Naive thymus-derived CD8-positive, alpha-beta T cell (primary cell): ENCODE measurements at regions of chr17 and their contacts with region 1.

Region 1: GRCh38 chr17:45317112-45317928 is 500 bp upstream of the MAP3K14 start:
- DNase-seq: peak; percentile 95 to 100 (median 100)
- ATAC-seq: peak; percentile 85 to 86
- H3K4me3 Mint-ChIP-seq: peak overlapping the region; percentile 76 to 96 (median 94)
- H3K27ac Mint-ChIP-seq: peak overlapping the region; percentile 88 to 99 (median 96)
- H3K4me1 Mint-ChIP-seq: peaks cover 56 to 88% (median 85%) of the 10 kb centered on the region in 4 donors
- H3K27me3 Mint-ChIP-seq: peaks cover 0 to 4% (median 0%) of the 10 kb centered on the region in 5 donors

Region 2: GRCh38 chr17:45228763-45229539 is 88.4 kb before region 1 on chr17:
- POLR2A ChIA-PET with region 1: interaction called, 115 read pairs
- DNase-seq: peak; percentile 63 to 86 (median 77)
- ATAC-seq: peak; percentile 48 to 55
- H3K4me3 Mint-ChIP-seq: peak overlapping the region; percentile 84 to 100 (median 98)
- H3K27ac Mint-ChIP-seq: peak overlapping the region; percentile 98 to 100 (median 100)
- H3K4me1 Mint-ChIP-seq: peaks cover 59 to 98% (median 86%) of the 10 kb centered on the region in 4 donors
- H3K27me3 Mint-ChIP-seq: no peaks in the 10 kb centered on the region

Region 3: DNA sequence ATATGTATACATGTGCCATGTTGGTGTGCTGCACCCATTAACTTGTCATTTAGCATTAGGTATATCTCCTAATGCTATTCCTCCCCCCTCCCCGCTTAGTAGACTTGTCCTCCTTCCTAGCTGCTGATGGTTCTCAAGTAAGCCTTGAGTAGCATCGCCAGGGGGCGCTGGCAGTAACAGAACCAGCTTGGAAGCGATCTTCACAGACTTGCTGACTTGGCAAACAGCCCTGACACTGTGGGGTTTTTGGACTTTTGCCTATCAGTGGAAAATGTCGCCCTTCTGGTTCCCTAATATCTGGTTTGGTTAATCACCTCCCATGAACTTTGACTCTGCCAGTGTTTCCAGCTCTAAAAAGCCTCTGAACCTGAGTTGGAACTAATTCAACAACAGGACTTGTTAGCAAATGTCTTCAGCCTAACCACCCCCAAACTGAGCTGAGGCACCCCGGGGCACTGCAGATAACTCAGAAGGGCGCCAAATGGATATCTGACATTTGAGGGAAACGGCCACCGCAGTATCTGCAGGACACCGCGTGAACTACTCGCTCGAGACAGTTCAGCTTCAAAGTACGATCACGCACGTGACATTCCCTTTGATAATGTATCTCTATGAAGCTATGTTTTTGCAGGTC is 40.0 kb before region 1 on chr17:
- POLR2A ChIA-PET with region 1: interaction called, 43 read pairs
- DNase-seq: peak; percentile 79 to 94 (median 85)
- ATAC-seq: peak; percentile 96 to 98
- H3K4me3 Mint-ChIP-seq: peak overlapping the region in 1 of 10 donors; percentile 15
- H3K27ac Mint-ChIP-seq: peak overlapping the region in 6 of 10 donors; percentile 46 to 85 (median 54)
- H3K4me1 Mint-ChIP-seq: peaks cover 7 to 10% (median 9%) of the 10 kb centered on the region in 4 donors
- H3K27me3 Mint-ChIP-seq: no peaks in the 10 kb centered on the region

Region 4: DNA sequence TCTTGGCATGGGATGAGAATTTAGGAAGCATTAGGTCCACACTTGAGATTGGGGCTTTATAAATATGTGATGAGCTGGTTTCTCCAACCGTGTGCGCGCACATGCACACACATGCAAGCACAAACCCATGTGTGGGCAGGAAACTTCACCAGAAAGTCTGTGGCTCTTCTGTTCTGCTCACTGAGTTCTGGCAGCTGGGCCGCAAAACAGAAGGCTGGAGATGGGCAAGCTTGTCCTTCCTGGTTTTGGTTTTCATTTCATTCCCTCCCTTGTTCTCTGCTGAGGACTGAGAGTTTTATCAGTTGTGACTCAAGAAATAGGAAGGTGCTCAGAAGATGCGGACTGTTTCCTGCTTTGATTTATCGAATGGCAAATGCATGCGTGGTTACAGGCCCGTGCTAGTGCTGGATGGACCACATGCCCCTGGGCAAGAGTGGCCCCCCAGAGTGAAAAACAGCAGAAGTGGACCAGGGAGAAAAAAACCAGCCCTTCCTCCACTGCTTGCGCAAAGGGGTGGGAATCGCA is 14.6 kb before region 1 on chr17:
- POLR2A ChIA-PET with region 1: interaction called, 14 read pairs
- DNase-seq: peak in 3 of 10 donors; percentile 30 to 42 (median 36)
- ATAC-seq: peak; percentile 57 to 69
- H3K4me3 Mint-ChIP-seq: peak overlapping the region in 9 of 10 donors; percentile 54 to 75 (median 60)
- H3K27ac Mint-ChIP-seq: peak overlapping the region; percentile 52 to 94 (median 90)
- H3K4me1 Mint-ChIP-seq: peaks cover 29 to 92% (median 69%) of the 10 kb centered on the region in 4 donors
- H3K27me3 Mint-ChIP-seq: no peaks in the 10 kb centered on the region